Activated CD4-positive, alpha-beta T cell treated with anti-CD3 and anti-CD28 coated beads, Interleukin-2, amount 10 ng/mL, durations not matched to agents 24 days and 14 days (primary cell): ENCODE measurements at regions of chr7 and their contacts with region 1.

Region 1: DNA sequence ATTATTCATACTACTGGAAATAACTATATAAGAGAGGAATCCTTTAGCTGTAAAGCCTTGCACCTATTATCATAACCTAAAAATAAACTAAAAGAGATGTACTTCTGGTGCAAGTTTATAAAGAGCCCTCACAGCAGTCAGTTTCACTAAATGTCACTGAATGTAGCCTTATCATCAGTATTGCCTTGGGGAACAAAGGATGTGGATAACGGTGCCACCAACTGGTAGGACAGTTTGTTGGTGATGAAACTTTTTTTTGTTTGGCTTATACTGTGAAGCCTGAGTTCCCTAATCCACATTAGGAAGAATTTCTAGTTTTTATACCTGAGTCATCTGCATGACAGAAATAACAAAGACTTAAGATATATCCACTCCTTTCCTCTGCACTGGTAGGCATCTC is 117.9 kb upstream of the COL1A2 start:
- DNase-seq: no peak
- H3K4me3 Mint-ChIP-seq: no peak overlapping the region
- H3K27ac Mint-ChIP-seq: no peak overlapping the region
- H3K4me1 Mint-ChIP-seq: no peaks in the 10 kb centered on the region
- H3K27me3 Mint-ChIP-seq: peaks cover 18% of the 10 kb centered on the region

Region 2: GRCh38 chr7:94004024-94004951 is 272.5 kb before region 1 on chr7 and contains the start of gene BET1:
- intact Hi-C with region 1: loop called (anchors 5 kb)
- DNase-seq: peak; percentile 98
- H3K4me3 Mint-ChIP-seq: peak within 1 kb of the TSS; percentile 94
- H3K27ac Mint-ChIP-seq: peak within 1 kb of the TSS; percentile 96
- H3K4me1 Mint-ChIP-seq: peaks cover 20% of the 10 kb centered on the region
- H3K27me3 Mint-ChIP-seq: peaks cover 17% of the 10 kb centered on the region
- total RNA-seq, gene BET1: 19.1 and 20.0 TPM in 2 replicates

Region 3: DNA sequence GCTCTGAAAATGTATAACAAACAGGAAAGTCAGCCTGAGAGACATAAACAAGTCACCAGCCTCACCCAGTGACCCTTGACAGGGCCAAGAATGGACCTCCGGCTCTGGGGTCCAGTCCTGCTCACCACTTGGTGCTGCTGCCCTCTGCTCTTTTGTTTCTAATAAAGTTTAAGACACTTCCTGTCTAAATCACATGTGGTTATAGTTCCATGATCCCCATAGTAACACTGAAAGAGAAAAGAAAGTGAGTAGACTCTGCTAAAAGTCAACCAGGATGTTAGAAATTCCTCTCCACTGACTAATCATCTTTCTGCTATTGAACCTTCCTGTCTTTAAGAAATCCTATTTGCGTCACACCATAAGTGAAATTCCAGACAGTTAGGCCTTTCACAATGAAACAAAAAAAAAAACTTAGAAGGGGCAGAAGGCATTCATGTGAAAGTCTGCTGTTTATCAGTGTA is 93.5 kb before region 1 on chr7:
- intact Hi-C with region 1: no loop called
- DNase-seq: no peak
- H3K4me3 Mint-ChIP-seq: no peak overlapping the region
- H3K27ac Mint-ChIP-seq: no peak overlapping the region
- H3K4me1 Mint-ChIP-seq: no peaks in the 10 kb centered on the region
- H3K27me3 Mint-ChIP-seq: peaks cover 4% of the 10 kb centered on the region